Posterior cingulate gyrus (tissue), 11 donors: ENCODE measurements at regions of chr1 and their contacts with region 1.

Region 1: DNA sequence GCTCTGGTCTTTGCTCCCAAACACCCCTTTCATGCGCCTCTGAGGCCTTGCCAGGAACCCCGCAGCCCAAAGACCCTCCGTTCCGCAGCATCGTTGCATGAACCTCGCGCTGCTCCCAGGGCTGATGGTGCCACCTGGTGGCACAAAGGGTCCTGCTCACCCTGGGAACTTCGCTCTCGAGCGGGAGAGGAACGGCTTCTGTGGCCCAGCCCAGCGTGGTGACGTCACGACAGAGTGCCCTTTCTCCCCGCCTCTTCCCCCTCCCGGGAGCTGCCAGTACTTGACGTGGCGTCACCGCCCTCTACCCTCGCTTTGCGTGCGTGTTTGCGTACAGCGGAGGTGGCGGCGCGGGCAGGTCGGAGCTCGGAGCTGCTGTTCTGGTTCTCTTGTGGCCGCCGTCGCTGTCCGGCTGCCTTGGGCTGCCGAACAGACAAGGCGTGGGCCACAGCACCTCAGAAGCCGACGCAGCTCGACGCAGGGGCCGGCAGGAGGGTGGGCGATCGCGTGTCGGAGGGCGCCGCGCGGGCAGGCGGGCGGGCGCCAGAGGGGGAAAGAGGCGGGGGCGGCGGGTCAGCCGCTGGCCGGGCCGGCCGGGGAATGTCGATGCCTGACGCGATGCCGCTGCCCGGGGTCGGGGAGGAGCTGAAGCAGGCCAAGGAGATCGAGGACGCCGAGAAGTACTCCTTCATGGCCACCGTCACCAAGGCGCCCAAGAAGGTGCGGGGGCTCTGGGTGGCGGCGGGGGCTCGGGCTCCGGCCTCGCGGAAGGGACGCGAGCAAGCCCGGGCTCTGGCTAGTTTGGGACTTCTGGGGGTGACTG is at the start of gene AHCYL1:
- DNase-seq: peak; percentile 99 to 100 (median 100)

Region 2: DNA sequence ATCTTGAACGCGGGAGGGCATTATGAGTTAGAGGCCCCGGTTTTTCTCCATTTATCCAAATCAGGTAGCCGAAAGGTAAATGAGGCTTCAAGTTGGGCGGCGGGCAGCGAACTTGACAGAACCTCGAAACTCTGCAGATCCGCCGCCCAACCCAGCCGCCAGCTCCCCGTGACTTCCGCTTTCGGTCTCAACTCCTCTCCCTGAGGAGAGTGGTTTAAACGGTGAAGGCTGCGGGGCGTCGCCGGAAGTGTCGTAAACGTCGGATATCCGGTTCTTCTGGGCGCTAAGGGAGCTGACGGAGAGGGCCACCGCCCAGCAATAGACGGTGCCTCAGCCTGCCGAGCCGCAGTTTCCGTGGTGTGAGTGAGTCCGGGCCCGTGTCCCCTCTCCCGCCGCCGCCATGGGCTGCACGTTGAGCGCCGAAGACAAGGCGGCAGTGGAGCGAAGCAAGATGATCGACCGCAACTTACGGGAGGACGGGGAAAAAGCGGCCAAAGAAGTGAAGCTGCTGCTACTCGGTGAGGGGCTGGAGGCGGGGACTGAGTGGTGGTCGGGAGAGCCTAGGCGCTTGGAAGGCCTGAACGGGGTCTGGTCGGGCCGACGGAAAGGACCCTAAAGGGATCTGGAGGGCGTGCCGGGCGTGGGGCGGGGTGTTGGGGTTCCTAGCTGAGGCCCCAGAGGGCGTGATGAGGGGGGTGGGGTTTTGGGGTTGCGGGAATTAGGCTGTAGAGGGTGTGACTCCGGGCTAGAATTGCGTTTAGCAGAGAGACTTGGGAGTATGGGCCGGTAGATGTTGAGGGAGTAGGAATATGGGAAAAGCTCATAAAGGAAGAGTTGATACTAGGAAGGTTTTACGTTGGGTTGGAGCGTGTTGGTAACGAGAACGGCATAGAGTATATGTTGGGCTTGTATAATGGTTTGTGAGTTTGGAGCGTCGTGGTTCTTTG is 436.1 kb before region 1 on chr1 and contains the start of gene GNAI3:
- intact Hi-C with region 1: loop called (anchors 5 kb)
- DNase-seq: peak; percentile 95 to 100 (median 98)

Region 3: DNA sequence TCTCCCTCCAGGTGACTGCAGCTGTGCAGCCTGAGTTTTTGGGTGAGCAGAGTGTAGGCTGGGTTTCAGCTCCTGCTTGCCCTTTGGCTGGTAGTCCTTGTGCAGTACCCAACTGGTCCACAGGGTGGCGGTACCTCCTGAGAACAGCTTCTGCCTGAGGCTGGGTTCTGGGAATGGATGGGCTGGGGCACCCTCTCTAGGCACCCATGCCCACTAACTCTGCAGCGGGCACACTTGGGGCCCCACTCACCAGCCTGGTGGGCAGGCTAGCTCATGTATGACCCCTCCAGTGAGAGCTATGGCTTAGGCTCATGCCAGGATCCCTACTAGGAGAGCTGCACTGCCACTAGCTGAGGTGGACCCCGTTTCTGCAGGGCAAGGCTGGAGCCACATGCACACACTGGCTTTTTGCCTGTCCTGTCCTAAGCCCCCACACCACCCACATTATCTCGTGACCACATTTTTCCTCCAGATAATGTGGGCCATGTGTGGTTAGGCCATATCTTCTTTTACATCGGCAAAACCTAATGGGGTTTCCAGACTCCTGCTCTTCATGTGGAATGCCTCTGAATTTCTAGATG is 344.3 kb before region 1 on chr1:
- intact Hi-C with region 1: loop called (anchors 1 kb)
- DNase-seq: peak; percentile 65 to 97 (median 91)

Region 4: GRCh38 chr1:109773146-109773899 is 211.3 kb before region 1 on chr1:
- intact Hi-C with region 1: loop called (anchors 1 kb)
- DNase-seq: peak; percentile 69 to 98 (median 85)

Region 5: DNA sequence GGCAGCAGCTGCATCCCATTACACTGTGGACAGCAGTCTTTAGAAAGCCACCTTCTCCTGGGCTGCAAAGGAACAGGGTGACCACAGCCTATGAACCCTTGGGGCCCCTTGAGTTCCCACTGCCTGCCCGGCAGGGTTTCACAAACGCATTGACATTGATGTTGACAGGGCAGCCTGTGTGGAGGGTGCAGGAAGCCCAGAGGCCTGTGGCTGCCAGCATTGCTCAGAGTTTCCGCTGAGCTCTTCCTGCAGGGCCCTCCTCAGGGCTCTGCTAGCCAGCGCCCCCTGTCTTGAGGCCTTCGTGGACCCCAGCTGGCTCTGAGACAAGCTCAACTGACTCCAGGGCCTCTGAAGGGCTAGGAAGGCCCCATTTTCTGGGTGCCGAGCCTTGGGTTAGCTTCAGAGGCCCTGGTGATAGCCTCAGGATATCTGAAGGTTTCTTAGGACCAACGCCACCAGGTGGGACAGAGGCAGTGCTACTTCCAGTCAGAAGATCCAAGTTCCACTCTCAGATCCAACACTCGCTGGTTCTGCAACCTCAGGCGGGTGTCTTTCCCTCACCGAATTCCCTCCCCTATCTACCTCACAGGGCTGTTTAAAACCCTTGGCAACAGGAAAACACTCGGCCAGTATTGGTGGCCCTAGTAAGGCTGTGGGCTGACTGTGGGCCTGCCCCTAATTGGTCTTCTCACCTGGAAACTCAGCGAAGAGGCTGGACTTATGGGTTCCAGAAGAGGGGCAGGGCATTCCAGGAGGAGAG is 193.8 kb before region 1 on chr1:
- intact Hi-C with region 1: loop called (anchors 5 kb)
- DNase-seq: peak in 5 of 10 donors; percentile 12 to 86 (median 26)

Region 6: GRCh38 chr1:109923131-109923945 is 61.3 kb before region 1 on chr1:
- intact Hi-C with region 1: loop called (anchors 5 kb)
- DNase-seq: peak in 2 of 10 donors; percentile 52 to 67